ENCODE measurements at regions of chr7 and their contacts with region 1.

Region 1: GRCh38 chr7:92178927-92179924 is at the start of gene LRRD1:
- DNase-seq: peak; percentile 44
- H3K4me3 ChIP-seq: peak within 1 kb of the TSS; percentile 57
- H3K27ac ChIP-seq: peak within 1 kb of the TSS; percentile 41
- H3K27me3 ChIP-seq: no peaks in the 10 kb centered on the region
- CTCF ChIP-seq: peak; percentile 95
- polyA plus RNA-seq, gene LRRD1: not detected in 2 replicates

Region 2: DNA sequence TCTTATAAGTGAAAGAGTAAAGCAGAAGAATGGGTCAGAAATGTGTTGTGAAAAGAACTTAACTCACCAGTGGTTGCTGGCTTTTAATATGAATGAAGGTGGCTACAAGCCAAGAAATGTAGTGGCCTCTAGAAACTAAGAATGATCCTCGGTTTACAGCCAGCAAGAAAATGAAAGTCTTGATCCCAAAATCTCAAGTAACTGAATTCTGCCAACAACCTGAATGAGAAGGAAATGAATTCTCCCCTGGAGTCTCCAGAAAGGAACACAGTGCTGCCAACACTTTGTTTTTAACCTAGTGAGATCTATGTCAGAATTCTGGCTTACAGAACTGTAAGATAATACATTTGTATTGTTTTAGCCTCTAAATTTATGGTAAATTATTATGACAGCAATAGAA is 722.0 kb before region 1 on chr7:
- CTCF ChIA-PET with region 1: no interaction called
- POLR2A ChIA-PET with region 1: no interaction called
- DNase-seq: no peak
- H3K4me3 ChIP-seq: no peak overlapping the region
- H3K27ac ChIP-seq: no peak overlapping the region
- H3K27me3 ChIP-seq: no peaks in the 10 kb centered on the region
- CTCF ChIP-seq: no peak

Region 3: GRCh38 chr7:92134271-92135051 is 44.8 kb before region 1 on chr7 and contains the start of gene CYP51A1:
- CTCF ChIA-PET with region 1: interaction called, 15 read pairs
- POLR2A ChIA-PET with region 1: interaction called, 3 read pairs
- DNase-seq: peak; percentile 72
- H3K4me3 ChIP-seq: peak within 1 kb of the TSS; percentile 89
- H3K27ac ChIP-seq: peak within 1 kb of the TSS; percentile 90
- H3K27me3 ChIP-seq: no peaks in the 10 kb centered on the region
- CTCF ChIP-seq: no peak
- polyA plus RNA-seq, gene CYP51A1: 9.1 and 12.3 TPM in 2 replicates

Region 4: DNA sequence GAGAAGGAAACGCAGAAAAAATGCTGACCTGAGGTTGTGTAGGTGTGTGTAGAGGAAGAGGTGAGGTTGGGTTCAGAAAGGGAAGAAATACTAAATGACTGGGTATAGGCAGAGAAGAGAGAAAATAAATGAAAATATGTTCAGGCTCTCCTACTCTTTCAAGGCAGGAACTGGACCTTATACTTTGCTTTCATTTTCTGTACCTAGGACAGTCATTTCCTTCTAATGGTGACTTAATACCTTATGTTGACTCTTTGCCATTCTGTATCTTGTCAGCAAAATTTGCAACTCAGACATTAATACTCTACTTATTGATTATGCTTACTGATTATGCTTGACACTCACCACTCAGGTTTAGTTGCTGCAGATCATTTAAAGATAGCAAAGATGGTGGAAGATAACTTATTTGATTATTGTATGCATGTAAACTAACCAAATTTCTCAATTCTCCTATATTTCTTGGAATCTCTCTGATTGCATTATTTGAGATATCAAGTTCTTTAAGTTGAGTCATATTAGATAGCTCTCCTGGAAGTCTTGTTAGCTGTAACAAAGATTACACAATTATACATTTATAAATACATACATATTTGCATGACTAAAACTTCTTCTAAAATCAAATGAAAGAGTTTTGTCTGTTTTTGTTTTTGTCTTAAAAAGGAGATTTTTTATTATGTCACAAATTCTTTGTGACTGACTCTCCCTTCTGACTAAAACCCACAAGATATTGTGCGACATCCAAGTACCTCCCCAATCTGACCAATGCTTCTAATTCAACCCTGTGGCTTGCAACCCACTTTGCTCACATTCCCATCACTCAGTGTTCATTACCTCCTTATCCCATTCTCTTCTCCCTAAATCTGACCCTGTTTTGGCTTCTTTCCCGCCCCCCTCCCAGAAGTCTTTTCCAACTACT is 20.3 kb before region 1 on chr7:
- CTCF ChIA-PET with region 1: interaction called, 41 read pairs
- POLR2A ChIA-PET with region 1: no interaction called
- DNase-seq: peak; percentile 64
- H3K4me3 ChIP-seq: no peak overlapping the region
- H3K27ac ChIP-seq: no peak overlapping the region
- H3K27me3 ChIP-seq: no peaks in the 10 kb centered on the region
- CTCF ChIP-seq: no peak

Region 5: GRCh38 chr7:92164559-92164958 is 14.7 kb before region 1 on chr7:
- CTCF ChIA-PET with region 1: interaction called, 41 read pairs
- POLR2A ChIA-PET with region 1: no interaction called
- DNase-seq: no peak
- H3K4me3 ChIP-seq: no peak overlapping the region
- H3K27ac ChIP-seq: no peak overlapping the region
- H3K27me3 ChIP-seq: no peaks in the 10 kb centered on the region
- CTCF ChIP-seq: no peak

Region 6: DNA sequence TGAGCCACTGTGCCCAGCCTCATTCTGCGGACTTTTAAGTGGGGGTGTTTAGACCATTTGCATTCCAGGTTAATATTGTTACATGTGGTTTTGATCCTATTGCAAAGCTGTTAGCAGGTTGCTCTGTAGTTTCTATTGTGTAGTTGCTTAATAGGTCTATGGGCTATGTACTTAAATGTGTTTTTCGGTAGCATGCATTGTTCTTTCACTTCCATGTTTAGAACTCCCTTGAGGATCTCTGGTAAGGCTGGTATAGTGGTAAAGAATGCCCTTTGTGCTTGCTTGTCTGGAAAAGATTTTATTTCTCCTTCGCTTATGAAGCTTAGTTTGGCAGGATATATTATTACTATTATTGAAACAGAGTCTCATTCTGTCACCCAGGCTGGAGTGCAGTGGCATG is 13.1 kb after region 1 on chr7:
- CTCF ChIA-PET with region 1: interaction called, 23 read pairs
- POLR2A ChIA-PET with region 1: no interaction called
- DNase-seq: no peak
- H3K4me3 ChIP-seq: no peak overlapping the region
- H3K27ac ChIP-seq: no peak overlapping the region
- H3K27me3 ChIP-seq: no peaks in the 10 kb centered on the region
- CTCF ChIP-seq: no peak

Region 7: DNA sequence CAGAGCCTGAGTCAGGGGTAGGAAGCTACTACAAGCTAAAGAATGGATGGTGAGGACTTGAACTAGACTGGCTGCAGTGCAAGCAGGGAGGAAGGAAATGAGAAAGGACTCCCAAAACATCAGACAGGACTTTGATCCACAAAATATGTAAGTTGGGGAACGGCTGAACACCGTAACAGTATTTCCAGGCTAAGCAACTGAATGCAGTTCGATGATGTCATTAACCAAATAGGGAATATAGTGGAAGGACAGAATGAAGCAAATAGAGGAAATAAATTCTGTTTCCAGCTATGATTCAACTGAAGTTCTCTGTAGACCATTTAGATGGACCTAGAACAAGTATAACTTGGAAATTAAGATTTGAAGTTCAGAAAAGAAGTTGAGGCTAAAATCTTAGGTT is 19.5 kb after region 1 on chr7:
- CTCF ChIA-PET with region 1: interaction called, 23 read pairs
- POLR2A ChIA-PET with region 1: no interaction called
- DNase-seq: no peak
- H3K4me3 ChIP-seq: no peak overlapping the region
- H3K27ac ChIP-seq: no peak overlapping the region
- H3K27me3 ChIP-seq: no peaks in the 10 kb centered on the region
- CTCF ChIP-seq: no peak

Region 8: DNA sequence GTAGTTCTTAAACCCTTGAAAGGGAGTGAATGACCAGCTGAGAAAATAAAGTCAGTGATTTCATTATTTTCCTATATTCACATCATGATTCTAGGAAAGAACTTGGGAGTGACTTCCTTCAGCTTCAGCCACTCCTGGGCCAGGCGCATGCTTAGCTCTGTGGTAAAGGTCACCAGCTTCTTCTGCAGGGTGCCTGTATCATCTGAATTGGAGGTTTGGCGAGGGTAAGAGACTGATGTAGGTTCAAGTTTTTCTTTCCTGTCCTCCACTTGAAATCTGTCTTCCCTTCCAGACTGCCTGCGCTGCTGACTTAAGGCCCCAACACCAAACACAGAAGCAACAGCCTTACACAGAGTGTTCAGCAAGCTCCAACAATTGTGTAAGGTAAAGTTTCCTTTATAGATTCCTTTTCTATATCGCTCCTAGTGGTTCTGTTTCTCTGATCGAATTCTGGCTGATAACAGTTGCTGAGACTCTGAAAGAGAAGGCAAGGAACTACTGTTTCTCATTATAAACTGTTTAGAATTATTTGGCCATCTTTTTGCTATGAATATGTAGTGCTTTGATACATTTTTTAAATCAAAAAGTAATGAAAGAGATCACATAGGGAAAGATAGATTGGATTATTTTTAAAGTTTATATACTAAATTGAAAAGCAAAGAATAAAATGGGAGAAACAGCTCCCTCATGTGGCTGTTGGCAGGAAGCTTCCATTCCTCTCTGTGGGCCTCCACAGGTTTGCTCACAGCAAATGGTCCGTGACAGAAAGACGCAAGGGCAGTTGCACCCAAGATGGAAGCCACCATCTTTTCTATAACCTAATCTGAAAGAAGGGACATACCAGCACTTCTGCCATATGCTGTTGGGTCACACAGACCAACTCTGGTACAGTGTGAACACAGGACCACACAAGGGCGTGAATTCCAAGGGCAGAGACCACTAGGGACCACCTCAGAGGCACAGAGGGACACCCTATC is 282.1 kb after region 1 on chr7:
- CTCF ChIA-PET with region 1: interaction called, 12 read pairs
- POLR2A ChIA-PET with region 1: no interaction called
- DNase-seq: no peak
- H3K4me3 ChIP-seq: no peak overlapping the region
- H3K27ac ChIP-seq: no peak overlapping the region
- H3K27me3 ChIP-seq: no peaks in the 10 kb centered on the region
- CTCF ChIP-seq: peak; percentile 82

Measured in AG04450 (cell line).